Ovary (tissue), 10 donors: ENCODE measurements at regions of chr15 and their contacts with region 1.

Region 1: DNA sequence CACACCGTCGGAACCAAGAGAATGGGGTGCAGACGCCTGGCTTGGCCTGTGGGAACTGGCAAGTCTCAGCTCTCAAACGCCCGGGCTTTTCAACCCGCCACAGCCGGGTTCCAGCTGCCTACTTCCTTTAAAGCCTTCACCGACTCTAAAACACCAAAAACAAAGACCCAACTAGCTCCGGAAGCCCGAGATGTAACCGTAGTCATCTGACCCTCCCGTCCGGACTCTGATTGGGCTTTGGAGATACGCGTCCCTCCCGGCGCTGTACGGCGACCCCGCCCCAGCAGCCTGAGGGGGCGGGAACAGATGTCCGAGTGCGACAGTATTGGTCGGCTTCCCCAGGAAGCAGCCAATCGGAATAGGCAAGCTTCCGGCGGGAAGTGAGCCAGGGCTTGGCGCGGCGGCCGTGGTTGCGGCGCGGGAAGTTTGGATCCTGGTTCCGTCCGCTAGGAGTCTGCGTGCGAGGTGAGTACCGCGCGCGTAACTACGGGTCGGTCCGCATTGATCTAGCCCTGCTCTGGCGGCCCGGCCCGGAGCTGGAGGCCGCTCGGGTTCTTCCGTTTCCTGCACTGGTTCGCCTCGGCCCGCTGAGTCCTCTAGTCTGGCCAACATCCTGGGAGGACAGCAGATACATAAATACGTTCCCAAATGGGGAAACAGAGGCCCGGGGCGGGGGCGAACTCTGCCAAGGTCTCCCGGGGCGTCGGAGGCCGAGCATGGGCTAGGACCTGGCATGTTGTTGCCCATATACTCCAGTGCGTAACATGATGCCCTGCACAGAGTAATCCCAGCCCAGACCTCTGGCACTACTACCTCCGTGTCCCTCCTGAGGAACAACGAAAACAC is at the start of gene BLM:
- DNase-seq: peak; percentile 94 to 97 (median 96)
- H3K4me3 ChIP-seq: peak within 1 kb of the TSS; percentile 70
- H3K27ac ChIP-seq: peak within 1 kb of the TSS; percentile 14 to 81
- H3K4me1 ChIP-seq: peaks cover 3% of the 10 kb centered on the region
- H3K27me3 ChIP-seq: no peaks in the 10 kb centered on the region
- CTCF ChIP-seq: peak; percentile 34 to 73 (median 52)
- EP300 ChIP-seq: no peak
- POLR2A ChIP-seq: no peak
- total RNA-seq, gene BLM: 0.15 to 1.9 (median 0.78) TPM in 6 of 7 donors, not detected in the other

Region 2: DNA sequence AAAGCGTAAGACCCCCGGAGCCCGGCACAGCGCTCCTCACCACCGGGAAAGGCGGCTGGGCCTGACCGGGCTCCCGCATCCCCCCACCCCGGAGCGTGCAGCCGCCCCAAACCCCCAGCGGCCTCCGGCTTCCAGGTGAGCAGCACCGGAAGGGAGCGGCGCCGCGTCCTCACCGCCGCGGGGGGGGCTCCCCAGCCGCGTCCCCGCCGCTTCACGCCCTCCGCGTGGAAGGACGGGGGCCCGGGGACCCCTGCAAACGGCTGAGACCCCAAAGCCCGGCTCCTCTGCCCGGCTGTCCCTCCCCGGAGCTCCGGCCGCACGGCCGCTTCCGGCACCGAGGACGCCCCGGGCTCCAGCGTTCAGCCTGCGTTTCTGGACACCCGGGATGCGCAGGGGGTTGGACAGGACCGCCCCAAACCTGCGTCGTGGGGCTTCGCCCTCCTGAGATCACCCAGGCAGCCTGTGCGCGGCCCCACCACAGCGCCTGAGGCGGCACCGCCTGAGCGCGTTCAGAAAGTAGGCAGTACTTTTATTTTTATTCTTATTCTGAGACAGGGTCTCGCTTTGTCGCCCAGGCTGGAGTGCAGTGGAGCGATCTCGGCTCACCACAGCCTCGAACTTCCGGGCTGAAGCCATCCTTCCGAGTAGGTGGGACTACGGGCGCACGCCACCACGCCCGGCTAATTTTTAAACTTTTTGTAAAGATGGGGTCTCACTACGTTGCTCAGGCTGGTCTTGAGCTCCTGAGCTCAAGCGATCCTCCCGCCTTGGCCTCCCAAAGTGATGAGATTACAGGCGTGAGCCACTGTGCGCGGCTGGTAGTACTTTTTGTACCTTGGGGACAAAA is 51.7 kb before region 1 on chr15:
- intact Hi-C with region 1: no loop called
- DNase-seq: peak; percentile 66 to 82 (median 74)
- H3K4me3 ChIP-seq: peak overlapping the region; percentile 61
- H3K27ac ChIP-seq: peak overlapping the region; percentile 84 to 87
- H3K4me1 ChIP-seq: no peaks in the 10 kb centered on the region
- H3K27me3 ChIP-seq: no peaks in the 10 kb centered on the region
- CTCF ChIP-seq: no peak
- EP300 ChIP-seq: no peak
- POLR2A ChIP-seq: peak; percentile 13

Region 3: GRCh38 chr15:90869601-90870353 is 152.6 kb after region 1 on chr15:
- intact Hi-C with region 1: loop called in 1 of 4 experiments (anchors 10 kb)
- DNase-seq: peak in 3 of 5 donors; percentile 42 to 49 (median 46)
- H3K4me3 ChIP-seq: no peak overlapping the region
- H3K27ac ChIP-seq: no peak overlapping the region
- H3K4me1 ChIP-seq: peaks cover 15% of the 10 kb centered on the region
- H3K27me3 ChIP-seq: no peaks in the 10 kb centered on the region
- CTCF ChIP-seq: no peak
- EP300 ChIP-seq: no peak
- POLR2A ChIP-seq: no peak

Region 4: GRCh38 chr15:91032919-91033803 is 316.0 kb after region 1 on chr15:
- intact Hi-C with region 1: loop called in 1 of 4 experiments (anchors 10 kb)
- DNase-seq: peak in 3 of 5 donors; percentile 25 to 44 (median 29)
- H3K4me3 ChIP-seq: no peak overlapping the region
- H3K27ac ChIP-seq: no peak overlapping the region
- H3K4me1 ChIP-seq: no peaks in the 10 kb centered on the region
- H3K27me3 ChIP-seq: no peaks in the 10 kb centered on the region
- CTCF ChIP-seq: no peak
- EP300 ChIP-seq: no peak
- POLR2A ChIP-seq: no peak